Activated CD4-positive, alpha-beta T cell treated with anti-CD3 and anti-CD28 coated beads for 36 hours (primary cell): ENCODE measurements at regions of chr2 and their contacts with region 1.

Region 1: GRCh38 chr2:28392297-28393113 is at the start of gene FOSL2:
- DNase-seq: peak; percentile 96
- ATAC-seq: peak; percentile 74
- H3K4me3 Mint-ChIP-seq: no peak within 1 kb of the TSS
- H3K27ac Mint-ChIP-seq: peak within 1 kb of the TSS; percentile 99
- H3K4me1 Mint-ChIP-seq: peaks cover 30% of the 10 kb centered on the region
- H3K27me3 Mint-ChIP-seq: no peaks in the 10 kb centered on the region
- total RNA-seq, gene FOSL2: 135 to 225 TPM

Region 2: DNA sequence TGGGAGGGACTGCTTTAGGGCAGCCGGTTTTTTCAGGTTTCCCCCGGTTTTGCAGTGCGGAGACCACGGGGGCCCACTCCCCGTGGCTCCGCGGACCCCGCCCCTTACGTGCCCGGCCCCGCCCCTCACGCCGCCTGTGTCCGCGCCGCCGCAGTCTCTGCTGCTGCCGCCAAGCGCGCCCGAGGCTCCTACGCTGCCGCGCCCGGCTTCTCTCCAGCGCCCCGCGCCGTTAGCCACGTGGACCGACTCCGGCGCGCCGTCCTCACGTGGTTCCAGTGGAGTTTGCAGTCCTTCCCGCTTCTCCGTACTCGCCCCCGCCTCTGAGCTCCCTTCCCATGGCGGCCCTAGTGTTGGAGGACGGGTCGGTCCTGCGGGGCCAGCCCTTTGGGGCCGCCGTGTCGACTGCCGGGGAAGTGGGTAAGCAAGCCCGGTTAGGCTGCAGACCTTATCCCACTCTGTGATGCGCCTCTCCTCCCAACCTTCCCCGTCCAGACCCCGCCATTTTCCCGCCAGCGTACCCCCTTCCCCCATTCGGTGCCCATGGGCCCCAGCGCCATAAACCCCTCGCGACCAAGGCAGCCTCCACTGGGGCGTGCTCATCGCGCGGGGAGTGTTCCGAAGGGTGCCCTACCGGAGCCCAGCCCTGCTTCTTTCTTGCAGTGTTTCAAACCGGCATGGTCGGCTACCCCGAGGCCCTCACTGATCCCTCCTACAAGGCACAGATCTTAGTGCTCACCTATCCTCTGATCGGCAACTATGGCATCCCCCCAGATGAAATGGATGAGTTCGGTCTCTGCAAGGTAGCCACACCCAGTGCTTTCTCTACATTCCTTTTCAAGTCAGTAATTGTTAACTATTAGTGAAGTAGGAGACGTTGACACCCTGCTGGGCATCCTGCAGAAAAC is 1175.0 kb before region 1 on chr2 and contains the start of gene CAD:
- CTCF ChIA-PET with region 1: no interaction called
- POLR2A ChIA-PET with region 1: no interaction called
- intact Hi-C with region 1: loop called in 1 of 2 experiments (anchors 10 kb)
- DNase-seq: peak; percentile 94
- ATAC-seq: peak; percentile 90
- H3K4me3 Mint-ChIP-seq: peak within 1 kb of the TSS; percentile 93
- H3K27ac Mint-ChIP-seq: peak within 1 kb of the TSS; percentile 87
- H3K4me1 Mint-ChIP-seq: peaks cover 37% of the 10 kb centered on the region
- H3K27me3 Mint-ChIP-seq: no peaks in the 10 kb centered on the region
- total RNA-seq, gene CAD: 107 to 147 TPM

Region 3: DNA sequence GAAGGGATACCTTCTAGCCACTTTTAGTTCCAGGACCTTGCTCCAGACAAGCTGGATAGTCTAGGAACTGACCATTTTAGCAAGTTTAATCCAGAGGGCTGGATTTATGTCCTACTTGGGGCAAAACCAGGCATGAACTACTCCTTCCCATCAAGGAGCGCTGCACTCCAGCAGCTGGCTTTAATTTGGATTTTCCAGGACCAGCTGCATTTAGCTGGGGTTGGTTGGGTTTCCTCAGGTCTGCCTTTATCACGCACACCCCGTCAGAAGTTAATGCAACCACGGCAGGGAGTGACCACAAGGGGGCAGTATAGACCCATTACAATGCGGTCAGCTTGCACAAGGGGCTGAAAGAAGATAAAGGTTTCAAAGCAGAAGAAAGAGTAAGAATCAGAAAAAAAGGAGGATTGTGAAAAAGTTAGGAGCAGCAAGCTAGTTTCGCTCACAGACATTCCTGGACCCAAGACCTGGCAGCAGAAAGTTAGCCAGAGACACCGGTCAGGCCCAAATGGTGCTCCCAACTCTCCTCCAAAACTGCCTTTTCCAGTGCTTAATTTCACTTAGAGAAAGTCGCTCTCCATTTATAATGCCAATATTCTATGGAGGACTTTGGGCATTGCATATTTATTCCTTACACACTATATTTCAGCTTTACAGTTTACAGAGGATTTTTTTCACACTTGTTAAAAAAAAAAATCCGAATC is 688.7 kb before region 1 on chr2:
- CTCF ChIA-PET with region 1: interaction called, 3 read pairs
- POLR2A ChIA-PET with region 1: no interaction called
- intact Hi-C with region 1: loop called (anchors 5 kb)
- DNase-seq: peak; percentile 92
- ATAC-seq: peak; percentile 78
- H3K4me3 Mint-ChIP-seq: no peak overlapping the region
- H3K27ac Mint-ChIP-seq: peak overlapping the region; percentile 7
- H3K4me1 Mint-ChIP-seq: peaks cover 21% of the 10 kb centered on the region
- H3K27me3 Mint-ChIP-seq: no peaks in the 10 kb centered on the region

Region 4: DNA sequence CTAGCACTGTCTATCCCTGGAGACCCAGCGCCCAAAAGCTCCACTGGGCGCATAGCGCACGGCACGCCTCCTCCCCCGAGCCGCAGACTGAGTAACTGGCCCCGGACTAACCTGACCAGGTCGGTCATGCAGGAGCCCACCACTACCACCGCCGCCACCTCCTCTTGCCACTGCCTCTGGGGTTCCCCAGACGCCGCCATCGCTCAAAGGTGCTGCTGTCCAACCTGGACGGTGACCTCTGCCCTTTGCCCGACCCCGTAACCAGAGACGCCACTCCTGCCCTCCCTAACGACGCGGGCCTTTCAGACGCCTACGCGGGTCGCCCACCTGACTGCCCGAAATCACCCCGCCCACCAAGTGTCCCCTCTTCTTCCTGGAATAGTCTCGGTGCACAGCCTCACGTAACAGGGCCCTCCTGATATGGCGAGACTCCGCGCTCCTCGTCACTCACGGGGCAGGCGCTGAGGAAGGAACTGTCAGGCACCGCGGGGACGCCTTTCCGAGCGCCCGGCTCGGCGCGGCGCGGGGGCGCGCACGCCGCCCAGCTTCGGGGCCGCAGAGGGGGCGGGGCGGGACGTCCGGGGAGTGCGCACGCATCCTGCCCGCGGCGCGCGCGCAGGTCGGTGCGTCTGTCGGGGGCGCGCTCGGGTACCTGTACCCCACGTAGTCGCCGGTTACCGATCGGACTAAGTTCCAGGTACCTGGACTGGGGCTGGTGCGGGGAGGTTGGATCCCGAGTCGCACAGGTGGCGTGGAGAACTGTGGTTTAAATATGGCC is 502.2 kb before region 1 on chr2 and contains the starts of genes BABAM2 and RBKS:
- CTCF ChIA-PET with region 1: no interaction called
- POLR2A ChIA-PET with region 1: interaction called, 6 read pairs
- intact Hi-C with region 1: loop called (anchors 1 kb)
- DNase-seq: peak; percentile 94
- ATAC-seq: peak; percentile 87
- H3K4me3 Mint-ChIP-seq: peak within 1 kb of the TSS; percentile 99
- H3K27ac Mint-ChIP-seq: peak within 1 kb of the TSS; percentile 99
- H3K4me1 Mint-ChIP-seq: peaks cover 58% of the 10 kb centered on the region
- H3K27me3 Mint-ChIP-seq: no peaks in the 10 kb centered on the region
- total RNA-seq, gene BABAM2: 58.4 to 81.1 TPM
- total RNA-seq, gene RBKS: 4.6 to 6.4 TPM

Region 5: GRCh38 chr2:28276076-28276618 is 116.4 kb before region 1 on chr2:
- CTCF ChIA-PET with region 1: no interaction called
- POLR2A ChIA-PET with region 1: no interaction called
- intact Hi-C with region 1: loop called in 1 of 2 experiments (anchors 1 kb)
- DNase-seq: peak; percentile 45
- ATAC-seq: peak; percentile 97
- H3K4me3 Mint-ChIP-seq: no peak overlapping the region
- H3K27ac Mint-ChIP-seq: peak overlapping the region; percentile 15
- H3K4me1 Mint-ChIP-seq: peaks cover 51% of the 10 kb centered on the region
- H3K27me3 Mint-ChIP-seq: no peaks in the 10 kb centered on the region

Region 6: DNA sequence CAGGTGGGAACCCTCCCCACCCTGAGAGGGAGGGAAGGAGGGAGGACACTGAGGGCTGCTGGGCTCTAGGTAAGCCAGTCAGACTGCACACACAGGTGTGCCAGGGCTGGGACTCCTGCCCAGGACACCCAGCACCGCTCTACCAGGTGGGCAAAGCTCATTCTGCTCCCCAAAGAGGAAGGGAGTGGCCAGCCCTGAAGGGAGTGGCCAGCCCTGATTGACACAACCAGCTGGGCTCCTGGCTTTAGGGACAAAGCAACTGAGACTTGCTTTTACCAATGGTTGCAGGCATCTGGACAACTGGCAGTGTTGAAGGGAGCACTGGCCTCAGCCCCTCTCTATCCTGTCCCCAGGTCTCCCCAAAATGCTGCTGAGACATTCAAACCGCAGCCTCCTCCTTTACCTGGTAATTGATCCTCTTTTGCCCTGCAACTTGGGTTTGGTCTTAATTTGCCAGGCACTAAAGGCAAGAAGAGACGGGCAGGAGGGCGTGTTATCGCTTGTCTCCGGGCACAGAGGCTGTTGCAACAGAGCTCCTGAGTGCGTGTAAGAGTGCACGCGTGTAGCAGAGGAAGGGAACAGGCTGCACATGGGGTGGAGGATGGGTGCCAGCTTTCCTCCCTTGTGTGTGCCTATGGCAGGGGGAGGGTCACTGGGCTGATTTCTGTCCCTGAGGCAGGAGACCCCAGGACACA is 14.4 kb before region 1 on chr2:
- CTCF ChIA-PET with region 1: no interaction called
- POLR2A ChIA-PET with region 1: no interaction called
- intact Hi-C with region 1: no loop called
- DNase-seq: peak; percentile 35
- ATAC-seq: peak; percentile 27
- H3K4me3 Mint-ChIP-seq: no peak overlapping the region
- H3K27ac Mint-ChIP-seq: no peak overlapping the region
- H3K4me1 Mint-ChIP-seq: peaks cover 20% of the 10 kb centered on the region
- H3K27me3 Mint-ChIP-seq: no peaks in the 10 kb centered on the region

Region 7: DNA sequence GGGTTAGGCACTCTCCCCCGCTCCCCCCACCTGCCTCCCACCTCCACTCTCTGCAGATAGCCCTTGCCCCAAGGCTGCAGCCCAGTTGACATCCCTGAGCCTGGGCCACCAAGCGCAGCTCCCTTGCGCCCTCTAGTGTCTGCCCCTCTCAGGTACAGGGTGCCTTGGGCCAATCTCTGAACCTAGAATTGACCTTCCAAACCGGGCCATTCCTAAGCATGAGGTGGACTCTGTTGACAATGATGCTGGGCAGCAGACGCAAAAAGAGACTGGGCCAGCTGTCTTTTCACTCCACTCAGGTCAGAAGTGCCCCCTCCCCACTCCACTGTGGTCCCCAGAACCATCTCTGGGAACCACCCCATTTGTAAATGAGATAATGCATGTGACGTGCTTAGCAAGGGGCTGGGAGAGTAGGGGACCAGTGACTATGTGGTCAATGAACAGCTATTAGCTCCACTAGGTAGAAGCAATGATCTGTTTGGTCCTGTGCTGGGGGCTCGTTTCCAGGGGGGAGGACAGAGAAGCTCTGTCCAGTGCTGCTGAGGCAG is 60.1 kb after region 1 on chr2:
- CTCF ChIA-PET with region 1: interaction called, 5 read pairs
- POLR2A ChIA-PET with region 1: interaction called, 5 read pairs
- intact Hi-C with region 1: loop called in 1 of 2 experiments (anchors 1 kb)
- DNase-seq: peak; percentile 92
- ATAC-seq: peak; percentile 57
- H3K4me3 Mint-ChIP-seq: no peak overlapping the region
- H3K27ac Mint-ChIP-seq: peak overlapping the region; percentile 11
- H3K4me1 Mint-ChIP-seq: peaks cover 40% of the 10 kb centered on the region
- H3K27me3 Mint-ChIP-seq: no peaks in the 10 kb centered on the region

Region 8: GRCh38 chr2:28855193-28855592 is 462.7 kb after region 1 on chr2:
- CTCF ChIA-PET with region 1: no interaction called
- POLR2A ChIA-PET with region 1: no interaction called
- intact Hi-C with region 1: no loop called
- DNase-seq: no peak
- ATAC-seq: no peak
- H3K4me3 Mint-ChIP-seq: no peak overlapping the region
- H3K27ac Mint-ChIP-seq: no peak overlapping the region
- H3K4me1 Mint-ChIP-seq: no peaks in the 10 kb centered on the region
- H3K27me3 Mint-ChIP-seq: no peaks in the 10 kb centered on the region

Region 9: DNA sequence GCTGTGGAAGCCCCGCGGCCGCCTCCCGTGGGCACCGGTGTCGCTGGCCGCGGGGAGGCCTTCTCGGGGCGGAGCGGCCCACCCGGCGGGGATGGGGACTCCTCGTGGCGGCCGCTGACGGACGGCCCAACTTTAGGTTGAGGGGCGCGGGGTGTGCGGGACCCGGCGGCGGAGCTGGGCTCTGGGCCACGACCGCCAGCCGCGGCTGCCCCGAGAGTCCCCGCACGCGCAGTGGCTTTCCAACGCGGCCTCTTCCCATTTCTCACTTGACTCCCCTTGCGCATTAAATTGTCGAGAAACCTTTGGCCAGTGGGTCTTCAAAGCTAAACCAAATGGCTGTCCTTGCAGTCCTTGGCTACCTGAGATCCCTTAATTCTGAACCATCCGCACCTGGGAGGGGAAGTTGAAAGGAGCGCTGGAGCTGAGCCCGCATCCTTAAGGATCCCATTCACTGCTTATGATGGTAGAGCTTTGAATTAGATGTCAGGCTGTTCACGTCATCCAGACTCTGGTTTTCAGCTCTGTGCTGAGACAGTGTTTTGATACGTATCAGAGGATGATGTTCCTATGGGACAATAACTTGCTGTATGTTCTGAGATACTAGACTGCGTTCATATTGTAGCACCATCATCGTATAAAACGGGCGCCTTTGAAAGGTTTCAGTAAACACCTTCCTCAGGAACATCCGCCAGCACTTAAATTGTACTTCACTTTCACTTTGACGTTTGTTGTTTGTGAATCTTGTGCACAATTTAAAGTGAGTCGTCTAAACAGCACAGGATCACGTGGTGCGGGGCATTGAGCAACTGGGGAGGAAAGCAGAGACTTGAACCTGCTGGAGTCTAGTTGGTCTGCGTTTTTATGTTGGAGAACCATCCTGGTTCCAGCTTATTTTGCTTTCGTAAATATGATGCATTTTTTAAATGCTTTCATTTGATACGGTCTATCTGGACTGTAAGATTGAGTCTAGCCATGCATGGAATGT is 723.6 kb after region 1 on chr2:
- CTCF ChIA-PET with region 1: no interaction called
- POLR2A ChIA-PET with region 1: interaction called, 3 read pairs
- intact Hi-C with region 1: loop called in 1 of 2 experiments (anchors 5 kb)
- DNase-seq: peak; percentile 88
- ATAC-seq: peak; percentile 74
- H3K4me3 Mint-ChIP-seq: peak overlapping the region; percentile 90
- H3K27ac Mint-ChIP-seq: peak overlapping the region; percentile 96
- H3K4me1 Mint-ChIP-seq: peaks cover 43% of the 10 kb centered on the region
- H3K27me3 Mint-ChIP-seq: peaks cover 5% of the 10 kb centered on the region